ENCODE measurements at regions of chrX and their contacts with region 1.

Region 1: GRCh38 chrX:38768079-38768478 is 33.2 kb upstream of the MID1IP1 start:
- DNase-seq: peak; percentile 6
- H3K4me3 ChIP-seq: no peak overlapping the region
- H3K27ac ChIP-seq: no peak overlapping the region
- H3K4me1 ChIP-seq: no peaks in the 10 kb centered on the region
- H3K27me3 ChIP-seq: peaks cover 7% of the 10 kb centered on the region
- CTCF ChIP-seq: peak; percentile 29 to 51

Region 2: DNA sequence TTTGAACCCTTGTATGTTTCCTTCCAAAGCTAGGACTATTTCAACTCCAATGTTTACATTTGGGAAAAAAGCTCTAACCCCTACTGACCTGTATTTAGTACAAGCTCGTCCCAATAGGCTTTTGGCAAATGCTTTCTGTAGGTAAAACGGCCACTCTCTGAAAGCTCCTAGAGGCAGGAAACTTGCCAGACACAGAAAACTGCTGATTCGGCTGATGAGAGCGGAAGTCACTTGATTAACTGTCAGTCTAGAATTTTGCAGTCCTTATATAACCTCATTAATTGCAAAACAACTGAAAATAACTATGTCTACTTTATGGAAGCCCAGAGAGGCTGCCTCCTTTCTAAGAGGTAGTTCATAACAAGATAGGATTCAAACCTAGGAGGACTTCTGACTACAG is 98.7 kb before region 1 on chrX:
- CTCF ChIA-PET with region 1: no interaction called
- dilution Hi-C with region 1: no loop called
- in situ Hi-C with region 1: no loop called
- intact Hi-C with region 1: no loop called
- DNase-seq: no peak
- H3K4me3 ChIP-seq: no peak overlapping the region
- H3K27ac ChIP-seq: no peak overlapping the region
- H3K4me1 ChIP-seq: no peaks in the 10 kb centered on the region
- H3K27me3 ChIP-seq: peaks cover 3% of the 10 kb centered on the region
- CTCF ChIP-seq: no peak

Region 3: GRCh38 chrX:39149761-39150160 is 381.7 kb after region 1 on chrX:
- CTCF ChIA-PET with region 1: no interaction called
- dilution Hi-C with region 1: no loop called
- in situ Hi-C with region 1: loop called (anchors 5 to 10 kb)
- intact Hi-C with region 1: loop called (anchors 1 kb)
- DNase-seq: peak; percentile 12
- H3K4me3 ChIP-seq: no peak overlapping the region
- H3K27ac ChIP-seq: no peak overlapping the region
- H3K4me1 ChIP-seq: no peaks in the 10 kb centered on the region
- H3K27me3 ChIP-seq: no peaks in the 10 kb centered on the region
- CTCF ChIP-seq: peak; percentile 63 to 85

Region 4: DNA sequence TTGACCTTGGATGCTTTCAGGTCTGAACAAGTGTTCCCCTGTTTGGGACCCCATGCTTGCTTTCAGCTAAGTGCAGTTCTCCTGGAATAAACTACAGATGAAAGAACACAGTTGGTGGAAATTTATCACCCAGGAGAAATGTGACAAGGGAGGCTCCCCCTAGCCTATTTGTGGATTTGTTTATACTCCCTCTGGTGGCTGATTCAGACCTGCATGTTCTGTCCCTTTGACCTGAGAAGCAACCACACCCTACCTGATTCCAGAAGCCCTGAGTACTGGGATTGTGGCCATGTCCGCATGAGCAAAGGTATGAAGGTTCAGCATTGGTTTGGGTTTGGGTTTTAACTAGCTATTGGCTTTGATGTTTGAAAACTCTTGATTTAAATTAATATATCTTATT is 474.1 kb after region 1 on chrX:
- CTCF ChIA-PET with region 1: no interaction called
- dilution Hi-C with region 1: no loop called
- in situ Hi-C with region 1: no loop called
- intact Hi-C with region 1: loop called (anchors 2 kb)
- DNase-seq: peak; percentile 14
- H3K4me3 ChIP-seq: no peak overlapping the region
- H3K27ac ChIP-seq: no peak overlapping the region
- H3K4me1 ChIP-seq: no peaks in the 10 kb centered on the region
- H3K27me3 ChIP-seq: peaks cover 3% of the 10 kb centered on the region
- CTCF ChIP-seq: peak; percentile 45 to 54